ENCODE measurements at regions of chr1 and their contacts with region 1.

Region 1: DNA sequence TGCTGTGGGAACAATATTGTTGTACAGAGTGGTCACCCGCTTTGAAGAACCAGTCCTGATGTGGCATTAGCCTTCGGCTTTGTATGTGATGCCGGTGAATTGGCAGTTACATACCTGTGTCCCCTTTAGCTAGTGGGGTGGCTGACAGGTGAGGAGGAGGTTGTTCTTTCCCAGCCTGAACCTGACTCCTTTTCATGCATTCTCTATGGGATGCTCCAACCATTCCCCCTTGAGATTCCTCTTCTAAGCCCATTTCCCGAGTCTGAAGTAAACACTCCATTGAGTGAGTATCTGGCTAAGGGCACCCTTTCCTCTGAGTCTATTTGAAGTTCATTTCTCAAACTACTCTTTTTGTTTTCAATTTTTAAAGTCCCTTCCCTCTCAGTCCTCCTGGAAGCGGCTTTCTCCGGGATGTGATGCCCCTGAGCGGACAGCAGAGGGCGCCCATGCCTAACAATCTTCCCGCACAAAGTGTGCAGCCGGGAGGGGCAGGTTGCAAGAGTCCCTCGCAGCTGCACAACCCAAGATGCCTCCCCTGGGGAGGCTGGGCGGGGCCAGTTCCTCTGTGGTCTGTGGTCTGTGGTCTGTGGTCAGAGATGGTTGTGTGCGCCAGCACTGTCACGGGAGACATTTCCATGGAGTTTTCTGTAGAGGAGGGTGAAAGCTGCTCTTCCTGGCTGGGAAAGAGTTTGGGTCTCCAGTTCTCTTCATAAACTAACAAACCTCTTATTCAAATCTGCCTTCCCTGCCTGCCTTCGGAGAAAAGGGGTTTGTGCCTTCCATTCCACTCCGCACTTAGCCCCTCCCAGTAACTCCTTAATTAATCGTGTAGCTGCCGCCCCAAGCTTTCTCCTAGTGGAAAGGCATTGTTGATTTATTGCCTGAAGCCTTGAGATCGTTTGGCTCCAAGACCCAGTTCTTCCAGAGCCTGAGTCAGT is 36.4 kb upstream of the LMX1A start:
- DNase-seq: peak; percentile 89
- ATAC-seq: peak; percentile 99
- H3K4me3 Mint-ChIP-seq: peak overlapping the region; percentile 60
- H3K27ac Mint-ChIP-seq: peak overlapping the region; percentile 77
- H3K4me1 Mint-ChIP-seq: peaks cover 9% of the 10 kb centered on the region
- H3K27me3 Mint-ChIP-seq: peaks cover 66% of the 10 kb centered on the region
- CTCF ChIP-seq: peak; percentile 87

Region 2: DNA sequence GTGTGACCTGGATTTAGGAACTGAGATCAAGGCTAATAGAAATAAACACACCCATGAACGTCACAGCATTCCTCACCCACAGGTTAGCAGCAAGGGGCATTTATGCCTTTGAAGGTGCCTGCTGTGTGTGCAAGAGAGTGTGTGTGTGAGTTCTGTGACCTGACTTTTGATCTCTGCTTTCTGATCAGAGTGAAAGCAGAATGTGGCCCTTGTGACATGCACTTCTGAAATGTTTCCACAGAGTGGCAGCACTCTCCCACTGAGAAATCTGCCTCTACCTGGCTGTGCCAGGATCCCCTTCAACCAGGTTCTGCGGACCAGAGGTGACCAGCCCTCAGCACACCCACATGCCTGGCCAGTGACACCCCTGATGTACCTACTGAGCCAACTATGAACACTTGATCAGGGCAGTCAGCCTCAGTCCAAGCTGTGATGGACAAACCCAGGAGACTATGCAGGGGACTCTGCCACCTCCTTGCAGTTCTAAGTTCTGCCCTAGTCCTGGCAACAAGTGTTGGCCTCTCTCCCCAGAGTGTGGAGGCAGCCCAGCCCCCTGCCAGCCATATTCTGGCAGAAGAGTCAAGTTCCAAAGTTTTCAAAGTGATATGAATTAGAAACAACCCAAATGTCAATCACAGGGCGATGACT is 11.1 kb after region 1 on chr1:
- CTCF ChIA-PET with region 1: interaction called, 18 read pairs
- POLR2A ChIA-PET with region 1: no interaction called
- intact Hi-C with region 1: no loop called
- DNase-seq: peak; percentile 50
- ATAC-seq: peak; percentile 75
- H3K4me3 Mint-ChIP-seq: no peak overlapping the region
- H3K27ac Mint-ChIP-seq: no peak overlapping the region
- H3K4me1 Mint-ChIP-seq: no peaks in the 10 kb centered on the region
- H3K27me3 Mint-ChIP-seq: peaks cover 33% of the 10 kb centered on the region
- CTCF ChIP-seq: peak; percentile 62

Region 3: DNA sequence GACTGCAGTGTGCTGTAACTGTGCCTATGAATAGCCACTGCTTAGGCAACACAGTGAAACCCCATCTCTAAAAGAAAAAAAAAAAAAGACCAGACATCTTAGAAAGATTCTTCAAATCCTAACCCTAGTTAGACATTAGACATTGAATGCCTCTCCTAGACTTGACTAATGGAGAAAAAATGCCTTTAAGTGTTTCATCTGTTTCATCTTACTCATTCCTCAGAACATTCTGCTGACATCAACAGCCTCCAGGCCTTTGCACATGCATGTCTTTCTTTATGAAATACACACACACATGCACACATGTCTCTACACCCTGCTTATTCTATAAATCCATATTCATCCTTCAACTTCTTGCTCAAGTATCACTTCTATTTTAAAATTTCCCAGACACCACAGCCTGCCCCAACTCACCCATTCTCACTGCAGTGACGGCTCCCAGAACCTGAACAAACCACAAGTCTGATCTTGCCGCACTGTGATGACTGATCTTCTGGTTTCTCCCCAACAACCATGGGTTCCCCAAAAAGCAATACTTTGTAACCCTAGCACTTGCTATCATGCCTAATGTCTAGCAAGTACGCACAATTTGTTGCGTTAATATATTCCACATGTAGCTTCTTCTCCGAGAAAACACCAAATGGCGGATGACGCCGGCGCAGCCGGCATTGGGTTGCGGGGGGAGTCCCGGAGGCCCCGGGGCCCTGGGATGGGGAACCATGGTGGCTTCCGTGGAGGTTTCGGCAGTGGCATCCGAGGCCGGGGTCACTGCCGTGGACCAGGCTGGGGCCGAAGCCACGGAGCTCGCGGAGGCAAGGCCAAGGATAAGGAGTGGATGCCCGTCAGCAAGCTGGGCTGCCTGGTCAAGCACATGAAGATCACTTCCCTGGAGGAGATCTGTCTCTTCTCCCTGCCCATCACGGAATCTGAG is 188.3 kb after region 1 on chr1:
- CTCF ChIA-PET with region 1: interaction called, 14 read pairs
- POLR2A ChIA-PET with region 1: no interaction called
- intact Hi-C with region 1: no loop called
- DNase-seq: no peak
- ATAC-seq: no peak
- H3K4me3 Mint-ChIP-seq: no peak overlapping the region
- H3K27ac Mint-ChIP-seq: no peak overlapping the region
- H3K4me1 Mint-ChIP-seq: no peaks in the 10 kb centered on the region
- H3K27me3 Mint-ChIP-seq: peaks cover 2% of the 10 kb centered on the region
- CTCF ChIP-seq: no peak

Region 4: DNA sequence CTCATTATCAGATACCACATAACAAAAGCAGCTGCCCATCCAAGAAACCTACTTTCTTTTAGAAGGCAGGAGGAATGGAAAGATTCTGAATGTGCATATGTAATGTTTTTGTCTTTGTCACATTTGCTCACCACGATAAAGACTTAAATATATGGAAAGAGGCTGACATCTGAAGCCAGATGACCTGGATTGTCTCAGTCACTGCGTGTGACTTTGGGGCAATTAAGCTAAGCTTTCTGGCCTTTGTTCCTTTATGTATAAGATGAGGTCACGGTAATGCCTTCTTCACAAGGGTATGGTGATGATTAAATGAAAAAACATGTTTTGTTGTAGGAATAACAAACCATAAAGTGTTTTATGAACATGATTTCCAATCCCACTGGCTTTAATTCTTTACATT is 193.5 kb after region 1 on chr1:
- CTCF ChIA-PET with region 1: interaction called, 77 read pairs
- POLR2A ChIA-PET with region 1: no interaction called
- intact Hi-C with region 1: no loop called
- DNase-seq: no peak
- ATAC-seq: no peak
- H3K4me3 Mint-ChIP-seq: no peak overlapping the region
- H3K27ac Mint-ChIP-seq: no peak overlapping the region
- H3K4me1 Mint-ChIP-seq: no peaks in the 10 kb centered on the region
- H3K27me3 Mint-ChIP-seq: peaks cover 29% of the 10 kb centered on the region
- CTCF ChIP-seq: no peak